PC-3 (cell line): ENCODE measurements at regions of chrX and their contacts with region 1.

Region 1: GRCh38 chrX:107776649-107777535 is 641 bp upstream of the NCBP2L start:
- DNase-seq: peak; percentile 94
- ATAC-seq: peak; percentile 74
- H3K4me3 ChIP-seq: peak overlapping the region; percentile 77
- H3K27ac ChIP-seq: no peak overlapping the region
- H3K4me1 ChIP-seq: peaks cover 10% of the 10 kb centered on the region
- H3K27me3 ChIP-seq: no peaks in the 10 kb centered on the region
- CTCF ChIP-seq: peak; percentile 77

Region 2: DNA sequence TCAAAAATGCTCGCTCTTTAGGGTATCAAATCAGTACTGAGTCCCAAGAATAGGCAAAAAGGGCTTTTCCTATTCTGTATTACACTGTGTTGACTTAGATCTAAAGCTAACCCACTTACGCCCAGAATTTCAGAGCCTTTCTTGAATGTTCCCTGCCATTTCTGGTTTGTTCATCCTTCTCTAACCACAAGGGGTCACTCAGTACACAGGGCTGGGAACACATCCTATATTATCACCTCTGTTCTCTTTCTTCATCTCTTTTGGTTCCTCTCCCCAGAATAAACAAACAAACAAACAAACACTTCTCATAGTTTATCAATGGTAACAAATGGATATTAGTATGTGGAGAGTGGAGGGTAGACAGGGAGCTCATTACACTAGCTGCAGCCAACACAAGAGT is 751.3 kb before region 1 on chrX:
- CTCF ChIA-PET with region 1: no interaction called
- POLR2A ChIA-PET with region 1: no interaction called
- intact Hi-C with region 1: loop called (anchors 5 kb)
- DNase-seq: peak; percentile 56
- ATAC-seq: peak; percentile 69
- H3K4me3 ChIP-seq: no peak overlapping the region
- H3K27ac ChIP-seq: no peak overlapping the region
- H3K4me1 ChIP-seq: no peaks in the 10 kb centered on the region
- H3K27me3 ChIP-seq: no peaks in the 10 kb centered on the region
- CTCF ChIP-seq: peak; percentile 81

Region 3: GRCh38 chrX:107654872-107655761 is 121.8 kb before region 1 on chrX:
- CTCF ChIA-PET with region 1: interaction called, 9 read pairs
- POLR2A ChIA-PET with region 1: no interaction called
- intact Hi-C with region 1: loop called (anchors 1 kb)
- DNase-seq: peak; percentile 86
- ATAC-seq: peak; percentile 84
- H3K4me3 ChIP-seq: peak overlapping the region; percentile 34
- H3K27ac ChIP-seq: peak overlapping the region; percentile 89
- H3K4me1 ChIP-seq: peaks cover 19% of the 10 kb centered on the region
- H3K27me3 ChIP-seq: no peaks in the 10 kb centered on the region
- CTCF ChIP-seq: peak; percentile 88

Region 4: DNA sequence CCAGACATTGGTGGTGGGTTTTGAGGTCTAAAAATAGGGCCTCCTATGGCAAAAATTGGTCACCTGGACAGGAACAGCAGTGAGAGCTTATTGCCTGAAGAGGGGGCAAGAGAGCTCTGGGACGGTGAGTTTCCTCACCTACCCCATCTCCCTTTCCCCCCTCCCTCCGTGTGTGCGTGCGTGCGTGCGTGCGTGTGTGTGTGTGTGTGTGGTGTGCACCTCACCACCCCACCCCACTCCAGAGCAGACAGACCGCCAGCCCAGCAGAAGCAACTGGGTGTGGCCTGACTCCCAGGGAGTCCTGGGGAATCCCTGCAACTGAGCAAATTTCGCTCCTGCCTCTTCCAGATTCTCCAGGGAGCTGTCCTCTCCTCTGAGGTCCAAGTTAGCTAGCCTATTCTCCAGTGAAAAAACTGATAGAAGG is 103.9 kb before region 1 on chrX:
- CTCF ChIA-PET with region 1: interaction called, 27 read pairs
- POLR2A ChIA-PET with region 1: no interaction called
- intact Hi-C with region 1: loop called (anchors 1 kb)
- DNase-seq: peak; percentile 84
- ATAC-seq: peak; percentile 39
- H3K4me3 ChIP-seq: 0 out of 2 replicates have a peak overlapping the region, but pooled peaks have one; percentile 12
- H3K27ac ChIP-seq: peak overlapping the region; percentile 30; the same call in 1 of the 2 replicates
- H3K4me1 ChIP-seq: peaks cover 28% of the 10 kb centered on the region
- H3K27me3 ChIP-seq: no peaks in the 10 kb centered on the region
- CTCF ChIP-seq: peak; percentile 66

Region 5: GRCh38 chrX:107716816-107717700 is 59.8 kb before region 1 on chrX:
- CTCF ChIA-PET with region 1: interaction called, 6 read pairs
- POLR2A ChIA-PET with region 1: no interaction called
- intact Hi-C with region 1: loop called (anchors 1 kb)
- DNase-seq: peak; percentile 69
- ATAC-seq: peak; percentile 64
- H3K4me3 ChIP-seq: peak overlapping the region; percentile 92
- H3K27ac ChIP-seq: peak overlapping the region; percentile 25; the same call in 1 of the 2 replicates
- H3K4me1 ChIP-seq: peaks cover 19% of the 10 kb centered on the region
- H3K27me3 ChIP-seq: no peaks in the 10 kb centered on the region
- CTCF ChIP-seq: no peak

Region 6: GRCh38 chrX:107894038-107894437 is 117.1 kb after region 1 on chrX:
- CTCF ChIA-PET with region 1: no interaction called
- POLR2A ChIA-PET with region 1: no interaction called
- intact Hi-C with region 1: loop called (anchors 1 kb)
- DNase-seq: peak; percentile 77
- ATAC-seq: peak; percentile 77
- H3K4me3 ChIP-seq: no peak overlapping the region
- H3K27ac ChIP-seq: no peak overlapping the region
- H3K4me1 ChIP-seq: no peaks in the 10 kb centered on the region
- H3K27me3 ChIP-seq: no peaks in the 10 kb centered on the region
- CTCF ChIP-seq: peak; percentile 76